Activated CD8-positive, alpha-beta memory T cell treated with anti-CD3 and anti-CD28 coated beads, Interleukin-2, amount 10 ng/mL, durations not matched to agents 7 days and 5 days (primary cell): ENCODE measurements at regions of chr1 and their contacts with region 1.

Region 1: GRCh38 chr1:161382214-161383019 is 14.7 kb upstream of the CFAP126 start:
- DNase-seq: no peak
- ATAC-seq: peak; percentile 84
- H3K4me3 Mint-ChIP-seq: no peak overlapping the region
- H3K27ac Mint-ChIP-seq: no peak overlapping the region
- H3K4me1 Mint-ChIP-seq: peaks cover 17% of the 10 kb centered on the region
- H3K27me3 Mint-ChIP-seq: no peaks in the 10 kb centered on the region

Region 2: DNA sequence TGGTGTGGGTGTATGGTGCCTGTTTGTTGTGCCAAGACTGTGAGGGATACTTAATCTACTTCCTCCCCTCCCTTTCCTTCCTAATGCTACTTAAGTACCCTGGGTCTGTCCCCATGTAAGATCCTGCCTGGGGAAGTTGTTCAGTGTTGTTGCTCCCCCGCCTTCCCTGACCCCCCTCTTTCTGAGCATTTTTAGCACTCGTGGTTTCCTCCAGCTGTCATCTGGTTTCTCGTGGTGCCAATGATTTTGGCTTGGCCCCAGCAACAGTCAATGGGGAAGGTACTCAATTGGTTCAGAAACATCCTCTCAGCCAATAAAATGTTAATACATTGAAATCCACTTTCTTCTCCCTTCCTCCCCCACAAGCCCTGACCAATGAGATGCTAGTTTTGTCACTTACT is 197.1 kb before region 1 on chr1:
- CTCF ChIA-PET with region 1: interaction called, 22 read pairs
- DNase-seq: peak; percentile 93
- ATAC-seq: peak; percentile 80
- H3K4me3 Mint-ChIP-seq: peak overlapping the region; percentile 61
- H3K27ac Mint-ChIP-seq: peak overlapping the region; percentile 96
- H3K4me1 Mint-ChIP-seq: peaks cover 75% of the 10 kb centered on the region
- H3K27me3 Mint-ChIP-seq: no peaks in the 10 kb centered on the region

Region 3: DNA sequence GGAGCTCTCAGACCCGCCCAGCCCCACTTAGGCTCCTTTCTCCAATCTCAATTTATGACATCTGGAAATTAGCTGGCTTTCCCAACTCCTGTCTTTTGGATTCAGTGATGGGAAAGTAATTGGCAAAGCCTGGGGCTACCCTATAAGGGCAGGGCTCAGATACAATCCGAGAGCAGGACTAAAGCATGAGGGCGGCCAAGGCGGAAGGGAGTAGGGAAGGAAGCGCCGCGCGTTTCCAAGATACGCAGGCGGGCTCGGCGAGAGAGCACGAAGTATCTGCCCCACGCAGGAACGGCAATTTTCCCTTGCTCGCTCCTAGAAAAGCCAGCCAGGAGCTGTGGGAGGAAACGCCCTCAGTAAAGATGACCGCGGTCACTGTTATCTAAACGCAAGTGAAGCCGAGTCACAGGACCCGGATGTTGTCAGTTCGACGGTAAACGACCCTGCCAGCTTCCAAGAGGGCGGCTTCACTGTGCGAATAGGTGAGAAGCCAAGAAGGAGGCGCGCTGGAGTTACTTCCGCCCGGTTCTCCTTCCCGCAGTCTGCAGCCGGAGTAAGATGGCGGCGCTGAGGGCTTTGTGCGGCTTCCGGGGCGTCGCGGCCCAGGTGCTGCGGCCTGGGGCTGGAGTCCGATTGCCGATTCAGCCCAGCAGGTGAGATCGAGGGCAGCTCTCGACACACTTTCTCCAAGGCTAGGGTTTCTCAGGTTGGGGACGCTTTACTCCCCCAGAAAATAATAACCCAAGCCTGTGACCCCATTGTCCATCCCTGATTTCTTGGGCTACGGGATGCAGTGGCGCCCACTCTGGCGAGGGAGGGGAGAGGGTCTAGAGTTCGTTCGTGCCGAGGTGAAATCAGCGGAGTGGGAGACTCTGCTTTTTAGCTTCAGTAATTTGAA is 180.3 kb before region 1 on chr1 and contains the start of gene NDUFS2:
- CTCF ChIA-PET with region 1: interaction called, 23 read pairs
- DNase-seq: peak; percentile 99
- ATAC-seq: peak; percentile 99
- H3K4me3 Mint-ChIP-seq: peak within 1 kb of the TSS; percentile 87
- H3K27ac Mint-ChIP-seq: peak within 1 kb of the TSS; percentile 95
- H3K4me1 Mint-ChIP-seq: peaks cover 64% of the 10 kb centered on the region
- H3K27me3 Mint-ChIP-seq: no peaks in the 10 kb centered on the region
- total RNA-seq, gene NDUFS2: 69.4 to 83.9 TPM

Region 4: GRCh38 chr1:161305867-161306519 is 76.4 kb before region 1 on chr1:
- CTCF ChIA-PET with region 1: interaction called, 24 read pairs
- DNase-seq: peak; percentile 92
- ATAC-seq: peak; percentile 96
- H3K4me3 Mint-ChIP-seq: peak overlapping the region; percentile 99
- H3K27ac Mint-ChIP-seq: peak overlapping the region; percentile 90
- H3K4me1 Mint-ChIP-seq: peaks cover 32% of the 10 kb centered on the region
- H3K27me3 Mint-ChIP-seq: no peaks in the 10 kb centered on the region

Region 5: DNA sequence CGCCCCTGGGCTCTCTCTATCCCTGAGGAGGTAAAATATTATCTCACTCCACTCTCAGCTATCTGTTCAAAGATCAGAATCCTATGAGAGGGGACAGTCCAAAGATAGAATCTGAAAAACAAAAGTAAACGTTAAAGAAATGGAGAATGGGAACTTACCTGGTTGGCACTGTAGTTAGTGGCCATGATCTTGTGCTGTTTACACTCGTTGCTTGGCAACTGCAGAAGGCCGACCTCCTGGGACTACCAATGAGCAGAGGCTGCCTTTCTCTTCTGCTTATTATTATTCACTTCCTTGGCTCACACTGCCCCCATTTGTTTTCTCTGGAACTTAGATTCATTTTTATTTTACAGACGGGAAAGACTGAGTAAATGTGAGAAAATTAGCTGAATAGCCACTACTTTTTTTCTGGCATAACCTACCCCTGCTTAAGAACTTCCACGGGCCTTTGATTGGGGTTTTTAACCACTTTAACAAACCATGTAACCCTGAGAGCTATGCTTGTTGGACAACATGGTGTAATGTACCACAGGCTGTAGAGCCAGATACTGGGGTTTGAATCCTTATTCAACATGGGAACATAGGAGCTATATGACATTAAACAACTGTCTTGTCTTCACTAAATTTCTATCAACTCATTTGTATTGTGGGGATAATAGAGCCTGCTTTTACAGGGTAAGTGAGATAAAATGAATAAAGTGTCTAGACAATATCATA is 14.6 kb before region 1 on chr1 and contains the start of gene CFAP126:
- CTCF ChIA-PET with region 1: interaction called, 11 read pairs
- DNase-seq: peak; percentile 78
- ATAC-seq: peak; percentile 99
- H3K4me3 Mint-ChIP-seq: no peak within 1 kb of the TSS
- H3K27ac Mint-ChIP-seq: peak within 1 kb of the TSS; percentile 38
- H3K4me1 Mint-ChIP-seq: peaks cover 17% of the 10 kb centered on the region
- H3K27me3 Mint-ChIP-seq: no peaks in the 10 kb centered on the region
- total RNA-seq, gene CFAP126: not detected